SK-N-SH (cell line): ENCODE measurements at regions of chr12 and their contacts with region 1.

Region 1: DNA sequence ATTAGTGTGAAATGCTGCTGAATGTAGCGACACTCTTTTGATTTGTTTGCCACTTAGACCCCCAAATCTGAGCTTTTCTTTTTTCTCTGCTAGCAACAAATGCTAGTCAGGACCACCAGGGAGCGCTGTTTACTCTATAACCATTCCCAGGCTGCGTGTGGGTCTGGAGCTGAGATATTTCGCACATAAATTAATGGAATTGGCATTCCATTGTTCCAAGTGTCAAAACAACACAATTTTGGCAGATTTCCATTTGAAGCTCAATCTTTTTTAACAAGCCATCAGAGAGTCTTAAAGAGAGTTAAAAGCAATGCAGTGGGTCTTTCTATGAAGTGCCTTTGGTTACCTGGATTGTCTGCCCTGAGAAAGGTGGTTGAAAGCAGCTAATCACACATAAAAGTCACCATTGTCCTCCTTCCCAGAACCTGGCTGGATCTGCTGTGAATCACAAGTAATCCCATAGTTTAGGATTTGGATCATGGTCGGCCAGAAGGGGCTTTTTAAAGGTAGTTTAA is 7.4 kb upstream of the TMEM132C start:
- DNase-seq: peak; percentile 52
- H3K4me3 ChIP-seq: peak overlapping the region in 1 of 2 experiments; percentile 48; a peak in 1 of 4 replicates
- H3K27ac ChIP-seq: no peak overlapping the region
- H3K4me1 ChIP-seq: no peaks in the 10 kb centered on the region
- H3K27me3 ChIP-seq: no peaks in the 10 kb centered on the region
- CTCF ChIP-seq: peak; percentile 37
- EP300 ChIP-seq: no peak
- RAD21 ChIP-seq: peak; percentile 75

Region 2: GRCh38 chr12:128190614-128191013 is 69.0 kb before region 1 on chr12:
- CTCF ChIA-PET with region 1: interaction called, 14 read pairs
- POLR2A ChIA-PET with region 1: no interaction called
- DNase-seq: peak; percentile 69
- H3K4me3 ChIP-seq: no peak overlapping the region; a peak in 1 of 4 replicates
- H3K27ac ChIP-seq: no peak overlapping the region
- H3K4me1 ChIP-seq: no peaks in the 10 kb centered on the region; a peak in 1 of 4 replicates
- H3K27me3 ChIP-seq: no peaks in the 10 kb centered on the region
- CTCF ChIP-seq: no peak
- EP300 ChIP-seq: no peak
- RAD21 ChIP-seq: peak; percentile 63

Region 3: GRCh38 chr12:128276471-128276870 is 16.9 kb after region 1 on chr12:
- CTCF ChIA-PET with region 1: interaction called, 40 read pairs
- POLR2A ChIA-PET with region 1: no interaction called
- DNase-seq: no peak
- H3K4me3 ChIP-seq: no peak overlapping the region
- H3K27ac ChIP-seq: no peak overlapping the region
- H3K4me1 ChIP-seq: no peaks in the 10 kb centered on the region
- H3K27me3 ChIP-seq: no peaks in the 10 kb centered on the region
- CTCF ChIP-seq: no peak
- EP300 ChIP-seq: no peak
- RAD21 ChIP-seq: no peak

Region 4: DNA sequence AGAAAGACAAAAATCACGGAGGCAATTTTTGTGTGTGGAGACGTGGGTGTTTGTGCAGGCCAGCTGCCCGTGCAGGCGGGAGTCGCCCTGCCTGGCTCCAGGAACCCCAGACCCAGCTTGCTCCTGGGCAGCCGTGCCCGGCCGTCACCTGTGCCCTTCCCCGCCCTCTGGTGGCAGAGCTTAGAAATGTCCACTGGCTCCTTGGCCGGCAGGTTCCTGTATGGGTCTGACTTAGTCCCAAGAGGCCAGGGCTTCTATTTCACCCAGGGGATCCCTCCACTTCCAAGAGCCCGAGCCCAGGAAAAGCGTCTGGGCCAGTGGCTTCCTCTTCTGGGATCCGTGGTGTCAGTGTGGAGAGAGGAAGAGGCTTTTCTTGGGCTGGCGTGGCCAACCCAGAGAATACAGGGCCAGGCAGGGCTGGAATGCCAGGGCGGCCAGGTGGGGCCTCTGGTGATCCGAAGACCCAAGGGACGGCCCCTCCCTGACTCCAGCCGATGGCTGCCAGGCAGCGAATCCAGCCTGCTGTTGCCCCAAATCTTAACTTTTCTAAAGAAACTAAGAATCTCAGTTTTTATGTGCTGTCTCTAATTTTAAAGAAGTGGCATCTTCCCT is 128.3 kb after region 1 on chr12:
- CTCF ChIA-PET with region 1: interaction called, 87 read pairs
- POLR2A ChIA-PET with region 1: no interaction called
- DNase-seq: peak; percentile 69
- H3K4me3 ChIP-seq: no peak overlapping the region; a peak in 1 of 4 replicates
- H3K27ac ChIP-seq: no peak overlapping the region
- H3K4me1 ChIP-seq: no peaks in the 10 kb centered on the region
- H3K27me3 ChIP-seq: no peaks in the 10 kb centered on the region
- CTCF ChIP-seq: 0 out of 2 replicates have a peak, but pooled peaks have one; percentile 11
- EP300 ChIP-seq: no peak
- RAD21 ChIP-seq: peak; percentile 59